Heart right ventricle (tissue), 16 donors: ENCODE measurements at regions of chr18 and their contacts with region 1.

Region 1: GRCh38 chr18:68429841-68430240 is 285.1 kb downstream of the TMX3 start:
- DNase-seq: no peak
- ATAC-seq: no peak
- H3K4me3 ChIP-seq: no peak overlapping the region
- H3K27ac ChIP-seq: no peak overlapping the region
- H3K4me1 ChIP-seq: no peaks in the 10 kb centered on the region
- H3K27me3 ChIP-seq: no peaks in the 10 kb centered on the region
- CTCF ChIP-seq: no peak

Region 2: GRCh38 chr18:66533693-66534092 is 1896.1 kb before region 1 on chr18:
- intact Hi-C with region 1: loop called in 1 of 10 experiments (anchors 5 kb)
- DNase-seq: no peak
- ATAC-seq: no peak
- H3K4me3 ChIP-seq: no peak overlapping the region
- H3K27ac ChIP-seq: no peak overlapping the region
- H3K4me1 ChIP-seq: no peaks in the 10 kb centered on the region
- H3K27me3 ChIP-seq: no peaks in the 10 kb centered on the region
- CTCF ChIP-seq: no peak